Activated naive CD8-positive, alpha-beta T cell treated with anti-CD3 and anti-CD28 coated beads, Interleukin-2, amount 10 ng/mL, durations not matched to agents 7 days and 5 days (primary cell): ENCODE measurements at regions of chr5 and their contacts with region 1.

Region 1: GRCh38 chr5:140401362-140402257 is at the start of gene ANKHD1:
- DNase-seq: peak; percentile 93
- ATAC-seq: peak; percentile 85
- H3K4me3 Mint-ChIP-seq: no peak within 1 kb of the TSS
- H3K27ac Mint-ChIP-seq: no peak within 1 kb of the TSS
- H3K4me1 Mint-ChIP-seq: peaks cover 28% of the 10 kb centered on the region
- H3K27me3 Mint-ChIP-seq: no peaks in the 10 kb centered on the region
- total RNA-seq, gene ANKHD1: 148 to 156 TPM

Region 2: DNA sequence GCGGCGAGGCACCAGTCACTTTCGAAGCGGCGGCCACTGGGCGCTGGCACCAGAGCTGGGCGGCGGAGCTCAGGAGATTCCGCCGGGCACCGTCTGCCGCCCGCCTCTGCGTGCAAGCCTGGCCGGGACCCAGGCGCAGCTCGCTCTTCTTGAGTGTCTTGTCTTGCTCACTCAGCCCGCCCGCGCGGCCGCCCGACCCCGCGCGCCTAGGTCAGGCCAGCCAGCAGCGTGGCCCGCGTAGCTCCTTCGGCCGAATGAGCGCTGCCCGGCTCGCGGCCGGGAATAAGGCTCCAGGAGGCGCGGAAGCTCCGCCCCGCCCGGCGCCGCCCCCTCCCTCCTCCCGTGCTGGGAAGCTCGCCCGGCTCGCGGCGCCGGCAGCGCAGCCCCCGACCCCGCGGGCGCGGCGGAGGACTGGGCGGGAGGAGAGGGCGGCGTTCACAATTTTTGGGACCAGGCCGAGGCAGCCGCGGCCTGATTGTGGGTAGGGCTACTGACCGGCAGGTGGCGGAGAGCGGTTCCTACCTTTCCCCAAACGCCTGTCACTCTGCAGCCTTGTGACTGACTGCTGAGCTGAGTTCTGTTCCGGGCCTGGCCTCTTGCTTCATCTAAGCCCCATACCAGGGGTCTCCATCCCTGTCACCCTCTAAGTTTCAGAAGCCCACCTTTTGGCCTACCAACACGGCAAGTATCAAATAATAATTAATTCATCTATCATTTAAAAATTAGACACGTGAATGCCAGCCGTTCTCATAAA is 55.1 kb before region 1 on chr5 and contains the start of gene HBEGF:
- POLR2A ChIA-PET with region 1: interaction called, 12 read pairs
- DNase-seq: peak; percentile 75
- ATAC-seq: peak; percentile 54
- H3K4me3 Mint-ChIP-seq: peak within 1 kb of the TSS; percentile 95
- H3K27ac Mint-ChIP-seq: peak within 1 kb of the TSS; percentile 84
- H3K4me1 Mint-ChIP-seq: peaks cover 58% of the 10 kb centered on the region
- H3K27me3 Mint-ChIP-seq: peaks cover 10% of the 10 kb centered on the region
- total RNA-seq, gene HBEGF: 12.8 TPM

Region 3: DNA sequence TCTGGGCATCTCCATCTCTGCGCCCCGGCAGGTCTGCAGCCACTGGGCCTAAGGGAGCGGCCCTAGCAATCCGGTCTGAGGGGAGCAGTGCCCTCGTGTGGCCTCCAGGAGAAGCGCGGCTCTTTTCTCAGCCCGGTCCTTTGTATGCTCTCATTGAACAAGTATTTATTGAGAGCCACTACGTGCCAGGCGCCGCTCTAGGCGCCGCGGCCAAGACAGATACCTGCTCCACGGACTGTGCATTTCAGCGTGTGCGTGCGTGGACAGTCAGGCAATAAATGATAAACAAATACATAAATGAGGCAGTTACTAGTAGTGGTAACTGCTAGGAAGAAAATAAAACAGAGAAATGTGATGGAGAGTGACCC is 43.9 kb before region 1 on chr5:
- POLR2A ChIA-PET with region 1: no interaction called
- DNase-seq: peak; percentile 82
- ATAC-seq: peak; percentile 93
- H3K4me3 Mint-ChIP-seq: peak overlapping the region; percentile 83
- H3K27ac Mint-ChIP-seq: peak overlapping the region; percentile 23
- H3K4me1 Mint-ChIP-seq: peaks cover 8% of the 10 kb centered on the region
- H3K27me3 Mint-ChIP-seq: peaks cover 3% of the 10 kb centered on the region

Region 4: DNA sequence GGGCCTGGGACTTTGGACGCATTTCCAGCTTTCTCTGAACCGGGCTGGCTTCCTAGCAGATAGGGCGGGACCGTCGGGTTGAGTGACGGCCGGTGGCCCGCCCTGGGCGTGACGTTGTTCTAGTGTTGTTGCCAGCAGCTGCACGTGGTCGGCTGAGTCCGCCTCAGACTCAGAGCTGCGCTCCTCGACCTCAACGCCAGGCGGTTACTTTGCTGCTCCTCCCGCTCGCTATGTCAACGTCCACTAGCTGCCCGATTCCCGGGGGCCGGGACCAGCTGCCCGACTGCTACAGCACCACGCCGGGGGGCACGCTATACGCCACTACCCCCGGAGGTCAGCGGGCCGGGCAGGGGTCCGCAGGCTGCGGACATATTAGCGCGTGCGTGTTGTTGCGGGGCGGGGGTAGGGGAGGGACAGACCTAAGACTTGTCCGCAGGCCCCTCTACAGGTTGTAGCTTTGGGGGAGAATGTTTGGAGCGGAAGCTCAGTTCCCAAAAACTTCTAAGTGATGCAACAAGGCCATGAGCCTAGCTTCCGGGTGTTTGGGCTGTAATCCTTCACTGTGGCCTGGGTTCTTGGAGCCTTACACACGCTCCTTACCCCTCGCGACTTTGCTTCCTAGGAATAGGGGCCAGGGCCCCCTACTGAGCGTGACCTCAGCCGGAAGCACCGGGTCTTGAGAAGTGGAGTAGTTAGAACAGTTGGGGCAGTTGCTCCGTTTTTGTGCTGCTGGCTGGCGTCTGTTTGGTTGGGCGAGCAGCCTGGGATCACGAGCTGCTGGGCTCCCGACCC is 146.1 kb after region 1 on chr5 and contains the start of gene EIF4EBP3:
- POLR2A ChIA-PET with region 1: interaction called, 20 read pairs
- DNase-seq: peak; percentile 86
- ATAC-seq: peak; percentile 96
- H3K4me3 Mint-ChIP-seq: peak within 1 kb of the TSS; percentile 87
- H3K27ac Mint-ChIP-seq: peak within 1 kb of the TSS; percentile 99
- H3K4me1 Mint-ChIP-seq: peaks cover 35% of the 10 kb centered on the region
- H3K27me3 Mint-ChIP-seq: no peaks in the 10 kb centered on the region
- total RNA-seq, gene EIF4EBP3: 11.8 to 12.0 TPM

Region 5: GRCh38 chr5:140639148-140639979 is 237.8 kb after region 1 on chr5 and contains the start of gene TMCO6:
- POLR2A ChIA-PET with region 1: interaction called, 13 read pairs
- DNase-seq: peak; percentile 98
- ATAC-seq: peak; percentile 93
- H3K4me3 Mint-ChIP-seq: peak within 1 kb of the TSS; percentile 90
- H3K27ac Mint-ChIP-seq: peak within 1 kb of the TSS; percentile 81
- H3K4me1 Mint-ChIP-seq: peaks cover 30% of the 10 kb centered on the region
- H3K27me3 Mint-ChIP-seq: peaks cover 3% of the 10 kb centered on the region
- total RNA-seq, gene TMCO6: 39.2 to 43.7 TPM